ENCODE measurements at regions of chr14 and their contacts with region 1.

Region 1: DNA sequence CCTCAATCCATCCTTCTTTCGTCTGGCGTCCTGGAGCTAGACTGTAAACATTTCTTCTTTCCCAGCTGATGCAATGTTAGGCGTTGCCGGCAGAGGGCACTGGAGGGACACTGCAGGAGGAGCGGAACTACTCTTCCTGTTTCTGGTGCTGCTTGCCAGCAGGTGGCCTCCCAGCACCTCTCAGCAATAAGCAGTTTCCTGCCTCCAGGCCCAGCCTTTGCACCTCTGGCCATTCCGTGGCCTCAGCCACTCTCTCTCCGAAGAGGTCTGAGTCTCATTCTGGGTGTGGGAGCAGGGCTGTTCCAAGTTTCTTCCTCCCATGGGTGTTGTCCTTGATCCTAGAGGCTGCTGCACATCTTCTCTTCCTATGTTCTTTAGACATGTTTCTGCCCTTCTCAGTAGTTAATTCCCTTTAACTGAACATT is 7.5 kb upstream of the ASPG start:
- DNase-seq: peak; percentile 91
- ATAC-seq: peak; percentile 96
- H3K4me3 Mint-ChIP-seq: no peak overlapping the region
- H3K27ac Mint-ChIP-seq: no peak overlapping the region
- H3K4me1 Mint-ChIP-seq: peaks cover 18% of the 10 kb centered on the region
- H3K27me3 Mint-ChIP-seq: peaks cover 3% of the 10 kb centered on the region

Region 2: GRCh38 chr14:103960457-103961055 is 117.5 kb before region 1 on chr14:
- CTCF ChIA-PET with region 1: no interaction called
- POLR2A ChIA-PET with region 1: no interaction called
- DNase-seq: no peak
- ATAC-seq: no peak
- H3K4me3 Mint-ChIP-seq: no peak overlapping the region
- H3K27ac Mint-ChIP-seq: no peak overlapping the region
- H3K4me1 Mint-ChIP-seq: no peaks in the 10 kb centered on the region
- H3K27me3 Mint-ChIP-seq: peaks cover 7% of the 10 kb centered on the region

Region 3: GRCh38 chr14:104026024-104026423 is 52.0 kb before region 1 on chr14:
- CTCF ChIA-PET with region 1: no interaction called
- POLR2A ChIA-PET with region 1: no interaction called
- DNase-seq: no peak
- ATAC-seq: no peak
- H3K4me3 Mint-ChIP-seq: no peak overlapping the region
- H3K27ac Mint-ChIP-seq: no peak overlapping the region
- H3K4me1 Mint-ChIP-seq: no peaks in the 10 kb centered on the region
- H3K27me3 Mint-ChIP-seq: peaks cover 31% of the 10 kb centered on the region

Region 4: DNA sequence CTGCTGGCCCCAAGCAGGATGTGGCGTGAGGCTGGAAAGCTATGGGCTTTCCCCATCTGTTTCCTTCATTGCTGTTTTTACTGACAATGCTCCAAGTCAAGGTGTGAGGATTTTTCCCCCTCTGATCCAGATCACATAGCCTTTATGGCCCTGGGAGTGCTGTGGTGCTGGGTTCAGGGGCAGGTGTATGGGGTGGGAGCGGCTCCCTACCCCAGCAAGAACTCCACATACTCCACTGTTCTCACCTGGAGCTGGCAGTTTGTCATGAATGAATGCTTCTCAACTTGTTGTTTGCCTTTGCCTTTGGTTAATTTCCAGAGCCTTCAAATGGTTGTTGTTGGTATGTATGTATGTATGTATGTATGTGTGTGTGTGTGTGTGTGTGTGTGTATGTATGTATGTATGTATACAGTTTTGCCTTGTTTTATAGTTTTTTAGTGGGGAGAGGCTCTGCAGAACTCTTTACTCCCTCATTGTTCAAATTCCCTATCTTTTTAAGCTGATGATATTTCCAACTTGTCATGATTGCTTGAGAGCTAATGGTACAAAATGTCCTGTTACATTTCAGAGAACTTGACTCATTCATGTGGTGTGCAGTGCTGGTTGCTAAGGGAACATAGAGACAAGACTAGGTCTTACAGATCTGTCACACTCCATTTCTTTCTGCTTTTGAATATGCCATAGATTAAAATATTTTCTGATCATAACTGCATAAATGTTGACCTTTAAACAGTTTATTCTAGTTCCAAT is 29.1 kb before region 1 on chr14:
- CTCF ChIA-PET with region 1: interaction called, 18 read pairs
- POLR2A ChIA-PET with region 1: no interaction called
- DNase-seq: no peak
- ATAC-seq: no peak
- H3K4me3 Mint-ChIP-seq: no peak overlapping the region
- H3K27ac Mint-ChIP-seq: no peak overlapping the region
- H3K4me1 Mint-ChIP-seq: peaks cover 3% of the 10 kb centered on the region
- H3K27me3 Mint-ChIP-seq: peaks cover 10% of the 10 kb centered on the region

Region 5: DNA sequence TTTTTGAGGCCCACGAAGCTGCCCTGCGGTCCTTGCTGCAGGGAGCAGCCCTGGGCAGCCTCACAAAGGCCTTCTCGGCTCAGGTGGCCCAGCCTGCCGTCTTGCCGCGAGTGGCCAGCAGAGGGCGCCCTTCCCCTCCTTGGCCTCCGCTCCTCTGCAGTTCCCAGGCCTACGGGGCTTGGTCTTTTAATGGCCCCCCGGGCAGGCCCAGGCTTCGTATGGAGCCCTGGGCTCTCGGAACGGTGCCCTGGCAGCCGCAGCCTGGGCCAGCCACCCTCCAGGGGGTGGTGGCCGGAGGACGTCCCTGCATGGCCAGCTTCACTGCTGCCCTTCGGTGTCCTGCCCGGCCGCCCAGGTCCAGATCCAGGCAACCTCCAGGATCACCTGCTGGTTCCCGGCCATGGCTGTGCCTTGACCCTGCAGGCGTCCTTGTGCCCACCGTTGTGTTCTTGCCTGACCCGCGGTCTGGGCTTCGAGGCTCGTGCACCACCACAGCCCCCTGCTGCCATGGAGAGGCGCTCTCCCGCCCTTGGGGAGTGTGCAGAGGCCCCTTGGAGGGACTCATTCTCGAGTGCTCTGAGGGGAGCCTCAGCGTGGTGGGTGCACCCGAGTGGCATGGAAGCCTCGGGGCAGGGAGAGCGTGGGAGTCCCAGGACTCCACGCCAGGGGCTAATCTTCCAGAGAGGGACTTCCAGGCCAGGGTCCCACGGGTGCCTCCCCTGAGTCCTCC is 16.8 kb after region 1 on chr14:
- CTCF ChIA-PET with region 1: interaction called, 25 read pairs
- POLR2A ChIA-PET with region 1: no interaction called
- DNase-seq: peak; percentile 80
- ATAC-seq: peak; percentile 73
- H3K4me3 Mint-ChIP-seq: no peak overlapping the region
- H3K27ac Mint-ChIP-seq: no peak overlapping the region
- H3K4me1 Mint-ChIP-seq: peaks cover 4% of the 10 kb centered on the region
- H3K27me3 Mint-ChIP-seq: no peaks in the 10 kb centered on the region

Region 6: DNA sequence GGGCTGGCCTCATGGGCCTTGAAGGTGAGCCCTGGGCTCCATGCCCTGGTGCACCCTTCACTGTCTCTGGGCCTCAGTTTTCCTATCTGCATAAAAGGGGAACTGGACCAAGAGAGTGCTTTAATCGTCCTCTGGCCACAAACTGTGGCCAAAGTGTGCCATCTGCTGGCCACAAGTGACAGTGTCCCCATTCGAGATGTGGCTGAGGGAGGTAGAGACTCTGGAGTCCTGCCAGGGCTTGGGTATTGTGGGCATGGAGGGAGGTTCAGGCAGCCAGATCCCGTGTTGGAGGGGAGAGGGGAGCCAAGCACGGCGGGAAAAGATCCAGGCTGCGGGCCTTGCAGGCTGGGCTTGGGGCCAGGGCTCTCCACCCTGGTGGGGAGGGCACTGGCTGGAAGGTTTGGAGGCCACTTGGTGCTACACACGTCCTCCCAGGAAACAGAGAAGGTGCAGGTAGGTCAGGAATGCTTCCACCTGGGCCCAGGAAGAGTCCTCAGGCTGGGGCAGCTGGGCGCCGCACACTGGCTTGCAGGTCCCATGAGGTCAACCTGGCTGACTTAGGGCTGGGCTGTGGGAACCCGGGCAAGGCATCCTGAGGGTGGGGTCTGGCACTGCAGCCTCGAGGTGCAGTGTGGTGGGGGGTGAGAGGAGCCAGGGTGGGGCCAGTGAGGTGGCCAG is 53.1 kb after region 1 on chr14:
- CTCF ChIA-PET with region 1: interaction called, 20 read pairs
- POLR2A ChIA-PET with region 1: no interaction called
- DNase-seq: no peak
- ATAC-seq: no peak
- H3K4me3 Mint-ChIP-seq: no peak overlapping the region
- H3K27ac Mint-ChIP-seq: no peak overlapping the region
- H3K4me1 Mint-ChIP-seq: no peaks in the 10 kb centered on the region
- H3K27me3 Mint-ChIP-seq: peaks cover 14% of the 10 kb centered on the region

Region 7: GRCh38 chr14:104563742-104564615 is 485.9 kb after region 1 on chr14:
- CTCF ChIA-PET with region 1: interaction called, 16 read pairs
- POLR2A ChIA-PET with region 1: no interaction called
- DNase-seq: peak; percentile 70
- ATAC-seq: peak; percentile 74
- H3K4me3 Mint-ChIP-seq: no peak overlapping the region
- H3K27ac Mint-ChIP-seq: no peak overlapping the region
- H3K4me1 Mint-ChIP-seq: peaks cover 2% of the 10 kb centered on the region
- H3K27me3 Mint-ChIP-seq: no peaks in the 10 kb centered on the region

Measured in activated CD8-positive, alpha-beta T cell treated with anti-CD3 and anti-CD28 coated beads, Interleukin-2, amount 10 ng/mL, durations not matched to agents 7 days and 5 days (primary cell).